CD4-positive, alpha-beta T cell (primary cell): ENCODE measurements at regions of chr7 and their contacts with region 1.

Region 1: GRCh38 chr7:139620676-139621344 is 97.3 kb downstream of the CLEC2L start:
- DNase-seq: peak; percentile 28 to 64 (median 49)
- ATAC-seq: peak; percentile 91
- H3K4me3 ChIP-seq: no peak overlapping the region
- H3K4me3 Mint-ChIP-seq: no peak overlapping the region
- H3K27ac ChIP-seq: no peak overlapping the region
- H3K27ac Mint-ChIP-seq: peak overlapping the region; percentile 4
- H3K4me1 ChIP-seq: peaks cover 14% of the 10 kb centered on the region
- H3K4me1 Mint-ChIP-seq: peaks cover 26% of the 10 kb centered on the region
- H3K27me3 ChIP-seq: no peaks in the 10 kb centered on the region
- H3K27me3 Mint-ChIP-seq: no peaks in the 10 kb centered on the region
- CTCF ChIP-seq: peak; percentile 77

Region 2: GRCh38 chr7:139502226-139502625 is 118.6 kb before region 1 on chr7:
- CTCF ChIA-PET with region 1: no interaction called
- POLR2A ChIA-PET with region 1: no interaction called
- intact Hi-C with region 1: loop called in 1 of 2 experiments (anchors 5 kb)
- DNase-seq: no peak
- ATAC-seq: no peak
- H3K4me3 ChIP-seq: no peak overlapping the region
- H3K4me3 Mint-ChIP-seq: no peak overlapping the region
- H3K27ac ChIP-seq: no peak overlapping the region
- H3K27ac Mint-ChIP-seq: no peak overlapping the region
- H3K4me1 ChIP-seq: peaks cover 9% of the 10 kb centered on the region
- H3K4me1 Mint-ChIP-seq: peaks cover 6% of the 10 kb centered on the region
- H3K27me3 ChIP-seq: no peaks in the 10 kb centered on the region
- H3K27me3 Mint-ChIP-seq: peaks cover 4% of the 10 kb centered on the region
- CTCF ChIP-seq: no peak

Region 3: GRCh38 chr7:139602143-139602722 is 18.6 kb before region 1 on chr7:
- CTCF ChIA-PET with region 1: interaction called, 15 read pairs
- POLR2A ChIA-PET with region 1: interaction called, 3 read pairs
- intact Hi-C with region 1: no loop called
- DNase-seq: peak in 3 of 14 experiments; percentile 40 to 53 (median 51)
- ATAC-seq: peak; percentile 78
- H3K4me3 ChIP-seq: no peak overlapping the region
- H3K4me3 Mint-ChIP-seq: no peak overlapping the region
- H3K27ac ChIP-seq: no peak overlapping the region
- H3K27ac Mint-ChIP-seq: no peak overlapping the region
- H3K4me1 ChIP-seq: no peaks in the 10 kb centered on the region
- H3K4me1 Mint-ChIP-seq: no peaks in the 10 kb centered on the region
- H3K27me3 ChIP-seq: no peaks in the 10 kb centered on the region
- H3K27me3 Mint-ChIP-seq: no peaks in the 10 kb centered on the region
- CTCF ChIP-seq: peak; percentile 70

Region 4: GRCh38 chr7:139635526-139636302 is 14.9 kb after region 1 on chr7:
- CTCF ChIA-PET with region 1: interaction called, 8 read pairs
- POLR2A ChIA-PET with region 1: interaction called, 38 read pairs
- intact Hi-C with region 1: loop called in 1 of 2 experiments (anchors 2 kb)
- DNase-seq: peak; percentile 44 to 93 (median 64)
- ATAC-seq: peak; percentile 87
- H3K4me3 ChIP-seq: peak overlapping the region; percentile 27
- H3K4me3 Mint-ChIP-seq: peak overlapping the region; percentile 72
- H3K27ac ChIP-seq: peak overlapping the region; percentile 58 to 71
- H3K27ac Mint-ChIP-seq: peak overlapping the region; percentile 92
- H3K4me1 ChIP-seq: peaks cover 47% of the 10 kb centered on the region
- H3K4me1 Mint-ChIP-seq: peaks cover 73% of the 10 kb centered on the region
- H3K27me3 ChIP-seq: no peaks in the 10 kb centered on the region
- H3K27me3 Mint-ChIP-seq: no peaks in the 10 kb centered on the region
- CTCF ChIP-seq: no peak